Adrenal gland (tissue), 19 donors: ENCODE measurements at regions of chr7 and their contacts with region 1.

Region 1: DNA sequence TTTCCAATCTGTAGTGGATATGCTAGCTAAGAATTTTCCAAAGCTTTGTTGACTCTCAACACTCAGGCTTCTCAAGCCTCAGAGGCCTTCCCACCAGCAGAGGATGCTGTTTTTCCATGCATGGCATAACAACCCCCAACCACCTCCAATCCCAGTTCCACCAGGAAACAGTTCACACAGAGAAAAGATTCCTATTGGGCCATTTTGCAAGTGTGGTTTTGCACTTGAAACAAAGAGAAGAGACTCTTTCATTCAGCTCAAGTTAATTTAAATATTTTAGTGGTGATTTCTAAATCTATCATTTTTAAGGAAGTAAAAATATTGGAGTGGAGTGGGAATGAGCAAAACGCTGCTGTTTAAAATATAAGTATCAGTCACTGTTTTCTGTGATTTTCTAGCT is 105.6 kb upstream of the COL1A2 start:
- DNase-seq: peak; percentile 58 to 87 (median 74)
- H3K4me3 ChIP-seq: no peak overlapping the region
- H3K27ac ChIP-seq: no peak overlapping the region
- H3K4me1 ChIP-seq: no peaks in the 10 kb centered on the region
- H3K27me3 ChIP-seq: no peaks in the 10 kb centered on the region
- CTCF ChIP-seq: peak; percentile 65 to 95 (median 90)
- POLR2A ChIP-seq: no peak

Region 2: GRCh38 chr7:94178230-94178629 is 110.8 kb before region 1 on chr7:
- intact Hi-C with region 1: no loop called
- DNase-seq: no peak
- H3K4me3 ChIP-seq: no peak overlapping the region
- H3K27ac ChIP-seq: no peak overlapping the region
- H3K4me1 ChIP-seq: peaks cover 0 to 4% of the 10 kb centered on the region in 2 donors
- H3K27me3 ChIP-seq: no peaks in the 10 kb centered on the region
- CTCF ChIP-seq: no peak
- POLR2A ChIP-seq: no peak

Region 3: GRCh38 chr7:94382132-94382531 is 93.1 kb after region 1 on chr7:
- intact Hi-C with region 1: no loop called
- DNase-seq: no peak
- H3K4me3 ChIP-seq: no peak overlapping the region
- H3K27ac ChIP-seq: no peak overlapping the region
- H3K4me1 ChIP-seq: no peaks in the 10 kb centered on the region
- H3K27me3 ChIP-seq: no peaks in the 10 kb centered on the region
- CTCF ChIP-seq: no peak
- POLR2A ChIP-seq: no peak

Region 4: DNA sequence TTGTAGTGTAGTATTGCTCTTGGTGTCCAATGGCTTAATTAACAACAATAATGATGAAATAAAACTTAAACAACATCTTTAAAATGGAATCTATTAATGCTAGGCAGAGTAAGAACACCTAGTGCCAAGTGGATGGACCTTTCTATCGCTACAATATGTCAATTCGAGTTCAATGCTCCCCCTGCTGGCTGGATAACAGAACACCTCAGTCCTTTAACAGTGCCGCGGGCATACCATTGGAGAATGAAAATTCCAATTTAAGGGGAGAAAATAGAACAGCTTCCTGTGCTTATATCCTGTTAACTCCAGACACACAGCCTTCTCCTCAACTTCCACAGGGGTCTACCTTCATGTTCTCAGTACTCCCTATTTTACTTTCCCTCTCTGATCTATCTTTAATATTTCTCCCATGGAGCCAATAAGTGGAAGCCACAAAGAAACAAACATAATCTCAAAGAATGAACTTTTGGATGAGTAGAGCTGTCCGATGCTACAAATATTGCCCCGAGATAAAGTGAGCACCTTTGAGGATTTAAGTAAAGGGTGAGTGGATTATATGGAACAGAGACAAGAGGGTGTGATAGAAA is 147.0 kb after region 1 on chr7:
- intact Hi-C with region 1: loop called in 1 of 2 experiments (anchors 5 kb)
- DNase-seq: peak; percentile 36 to 86 (median 55)
- H3K4me3 ChIP-seq: no peak overlapping the region
- H3K27ac ChIP-seq: no peak overlapping the region
- H3K4me1 ChIP-seq: peaks cover 9 to 16% of the 10 kb centered on the region in 2 donors
- H3K27me3 ChIP-seq: no peaks in the 10 kb centered on the region
- CTCF ChIP-seq: peak; percentile 37 to 77 (median 59)
- POLR2A ChIP-seq: no peak

Region 5: DNA sequence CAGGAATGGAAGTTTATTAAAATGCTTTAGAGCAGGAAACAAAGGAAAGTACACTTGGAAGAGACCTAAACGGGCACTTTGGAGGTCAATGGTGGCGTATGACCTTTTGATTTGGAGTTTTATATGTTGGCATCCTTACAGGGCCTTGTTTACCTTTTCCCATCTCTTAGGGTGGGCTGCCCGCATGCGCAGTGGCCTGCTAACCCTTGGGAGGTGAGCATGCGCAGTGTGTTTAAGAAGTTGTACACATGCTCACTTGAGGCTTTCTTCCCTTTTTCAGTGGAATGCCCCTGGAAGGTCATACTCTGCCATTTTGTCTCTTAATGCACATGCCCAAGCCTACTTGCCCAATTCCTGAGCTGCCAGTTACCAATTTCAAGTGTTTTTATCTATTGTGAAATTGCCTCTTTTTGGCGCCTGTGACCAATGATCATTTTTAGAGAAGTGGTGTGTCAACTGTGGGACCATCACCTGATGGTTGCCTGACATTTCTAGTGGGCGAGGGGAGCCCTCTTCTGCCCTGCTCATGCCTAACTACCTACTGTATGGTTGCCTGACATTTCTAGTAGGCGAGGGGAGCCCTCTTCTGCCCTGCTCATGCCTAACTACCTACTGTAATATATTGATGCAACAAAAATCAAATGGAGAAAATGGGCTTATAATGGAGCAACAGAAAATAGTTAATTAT is 756.3 kb after region 1 on chr7:
- intact Hi-C with region 1: no loop called
- DNase-seq: no peak
- H3K4me3 ChIP-seq: no peak overlapping the region
- H3K27ac ChIP-seq: no peak overlapping the region
- H3K4me1 ChIP-seq: peaks cover 0 to 9% of the 10 kb centered on the region in 2 donors
- H3K27me3 ChIP-seq: no peaks in the 10 kb centered on the region
- CTCF ChIP-seq: peak in 1 of 6 experiments; percentile 11
- POLR2A ChIP-seq: no peak